ENCODE measurements at regions of chr2 and their contacts with region 1.

Region 1: GRCh38 chr2:147910990-147911473 is 66.2 kb downstream of the ACVR2A start:
- DNase-seq: peak; percentile 42
- H3K4me3 ChIP-seq: no peak overlapping the region
- H3K27ac ChIP-seq: no peak overlapping the region
- H3K4me1 ChIP-seq: peaks cover 5% of the 10 kb centered on the region
- H3K27me3 ChIP-seq: no peaks in the 10 kb centered on the region
- CTCF ChIP-seq: peak; percentile 47 to 65

Region 2: DNA sequence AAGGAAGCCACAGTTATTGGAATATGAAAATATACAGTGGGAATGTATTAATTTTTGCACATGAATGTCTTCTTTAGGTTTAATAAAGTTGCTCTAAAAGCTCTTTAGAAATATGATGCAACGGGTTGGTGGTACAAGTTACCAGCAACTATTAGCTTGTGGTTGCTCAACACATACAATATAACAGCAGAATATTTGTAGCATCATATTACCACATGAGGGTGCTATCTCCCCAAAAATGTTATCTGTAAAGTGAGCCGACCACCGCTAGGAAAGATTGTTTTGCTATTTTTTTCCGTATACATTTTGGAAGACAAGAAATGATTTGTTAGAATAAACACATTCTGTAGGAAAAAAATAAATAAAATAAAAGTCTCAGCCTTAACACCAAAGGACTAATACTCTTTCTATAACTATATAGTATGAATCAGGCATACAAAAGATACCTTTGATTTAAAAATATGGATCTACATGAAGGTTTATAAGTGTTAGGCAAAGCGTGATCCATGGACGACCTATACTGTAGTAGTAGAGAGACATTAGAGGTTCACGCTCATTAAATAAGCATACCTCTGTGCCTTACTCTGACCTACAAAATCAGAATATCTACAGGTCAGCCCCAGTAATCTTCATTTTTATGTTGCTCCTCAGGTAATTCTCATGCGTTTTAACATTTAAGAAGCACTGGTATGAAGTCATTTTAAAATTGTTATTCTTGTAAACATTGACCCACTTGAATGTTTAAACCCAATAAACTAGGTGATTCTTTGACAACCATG is 1176.8 kb before region 1 on chr2:
- CTCF ChIA-PET with region 1: no interaction called
- dilution Hi-C with region 1: no loop called
- in situ Hi-C with region 1: loop called (anchors 10 to 25 kb)
- intact Hi-C with region 1: loop called (anchors 2 kb)
- DNase-seq: peak; percentile 39
- H3K4me3 ChIP-seq: no peak overlapping the region
- H3K27ac ChIP-seq: no peak overlapping the region
- H3K4me1 ChIP-seq: no peaks in the 10 kb centered on the region
- H3K27me3 ChIP-seq: no peaks in the 10 kb centered on the region
- CTCF ChIP-seq: peak; percentile 56 to 62

Region 3: GRCh38 chr2:146927080-146927711 is 983.8 kb before region 1 on chr2:
- CTCF ChIA-PET with region 1: no interaction called
- dilution Hi-C with region 1: no loop called
- in situ Hi-C with region 1: loop called (anchors 25 kb)
- intact Hi-C with region 1: loop called (anchors 1 kb)
- DNase-seq: peak; percentile 59
- H3K4me3 ChIP-seq: no peak overlapping the region
- H3K27ac ChIP-seq: no peak overlapping the region
- H3K4me1 ChIP-seq: no peaks in the 10 kb centered on the region
- H3K27me3 ChIP-seq: no peaks in the 10 kb centered on the region
- CTCF ChIP-seq: peak; percentile 88

Region 4: GRCh38 chr2:147051248-147051647 is 859.8 kb before region 1 on chr2:
- CTCF ChIA-PET with region 1: no interaction called
- dilution Hi-C with region 1: no loop called
- in situ Hi-C with region 1: loop called (anchors 25 kb)
- intact Hi-C with region 1: no loop called
- DNase-seq: peak; percentile 3
- H3K4me3 ChIP-seq: peak overlapping the region in 1 of 3 experiments; percentile 31
- H3K27ac ChIP-seq: no peak overlapping the region
- H3K4me1 ChIP-seq: peaks cover 18% of the 10 kb centered on the region
- H3K27me3 ChIP-seq: no peaks in the 10 kb centered on the region
- CTCF ChIP-seq: no peak

Region 5: GRCh38 chr2:147331790-147332419 is 579.1 kb before region 1 on chr2:
- CTCF ChIA-PET with region 1: no interaction called
- dilution Hi-C with region 1: no loop called
- in situ Hi-C with region 1: loop called in 1 of 2 experiments (anchors 25 kb)
- intact Hi-C with region 1: loop called (anchors 1 kb)
- DNase-seq: peak; percentile 42
- H3K4me3 ChIP-seq: no peak overlapping the region
- H3K27ac ChIP-seq: no peak overlapping the region
- H3K4me1 ChIP-seq: no peaks in the 10 kb centered on the region
- H3K27me3 ChIP-seq: no peaks in the 10 kb centered on the region
- CTCF ChIP-seq: peak; percentile 61 to 73

Region 6: DNA sequence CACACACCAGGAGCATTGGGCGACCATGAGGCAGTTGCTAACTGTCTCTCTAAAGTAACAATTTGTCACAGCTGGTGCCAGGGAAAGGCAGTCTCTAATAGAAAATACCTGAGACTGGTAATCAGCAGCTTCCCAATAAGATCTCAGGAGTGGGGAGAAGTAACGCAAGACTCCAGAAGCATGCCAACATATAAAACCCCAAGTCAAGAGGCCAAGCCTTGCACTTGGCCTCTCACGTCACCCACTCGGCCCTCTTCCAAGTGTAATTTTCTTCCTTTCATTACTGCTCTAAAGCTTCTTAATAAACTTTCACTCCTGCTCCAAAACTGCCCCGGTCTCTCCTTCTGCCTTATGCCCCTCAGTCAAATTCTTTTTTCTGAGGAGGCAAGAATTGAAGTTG is 521.8 kb before region 1 on chr2:
- CTCF ChIA-PET with region 1: no interaction called
- dilution Hi-C with region 1: no loop called
- in situ Hi-C with region 1: no loop called
- intact Hi-C with region 1: no loop called
- DNase-seq: no peak
- H3K4me3 ChIP-seq: no peak overlapping the region
- H3K27ac ChIP-seq: no peak overlapping the region
- H3K4me1 ChIP-seq: no peaks in the 10 kb centered on the region
- H3K27me3 ChIP-seq: no peaks in the 10 kb centered on the region
- CTCF ChIP-seq: no peak

Region 7: DNA sequence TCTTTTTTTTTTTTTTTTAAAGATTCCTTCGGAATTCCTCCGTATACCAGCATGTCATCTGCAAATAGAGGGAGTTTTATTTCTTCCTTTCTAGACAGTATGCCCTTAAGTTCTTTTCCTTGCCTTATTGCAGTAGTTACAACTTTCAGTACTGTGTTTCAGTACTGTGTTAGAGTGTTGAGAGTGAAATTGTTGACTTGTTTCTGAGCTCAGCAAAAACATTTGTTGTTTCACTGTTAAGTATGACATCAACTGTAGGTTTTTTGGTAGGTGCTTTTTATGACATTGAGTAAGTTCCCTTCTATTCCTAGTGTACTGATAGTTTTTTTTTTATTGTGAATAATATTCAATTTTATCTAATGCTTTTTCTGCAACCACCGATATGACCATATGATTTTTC is 22.4 kb before region 1 on chr2:
- CTCF ChIA-PET with region 1: no interaction called
- dilution Hi-C with region 1: no loop called
- in situ Hi-C with region 1: no loop called
- intact Hi-C with region 1: no loop called
- DNase-seq: no peak
- H3K4me3 ChIP-seq: peak overlapping the region; percentile 11 to 16 (median 13)
- H3K27ac ChIP-seq: no peak overlapping the region
- H3K4me1 ChIP-seq: no peaks in the 10 kb centered on the region
- H3K27me3 ChIP-seq: no peaks in the 10 kb centered on the region
- CTCF ChIP-seq: no peak

Region 8: GRCh38 chr2:148237911-148238310 is 326.9 kb after region 1 on chr2:
- CTCF ChIA-PET with region 1: interaction called, 39 read pairs
- dilution Hi-C with region 1: no loop called
- in situ Hi-C with region 1: no loop called
- intact Hi-C with region 1: no loop called
- DNase-seq: no peak
- H3K4me3 ChIP-seq: no peak overlapping the region
- H3K27ac ChIP-seq: no peak overlapping the region
- H3K4me1 ChIP-seq: no peaks in the 10 kb centered on the region
- H3K27me3 ChIP-seq: no peaks in the 10 kb centered on the region
- CTCF ChIP-seq: no peak